ENCODE measurements at regions of chr7 and their contacts with region 1.

Region 1: DNA sequence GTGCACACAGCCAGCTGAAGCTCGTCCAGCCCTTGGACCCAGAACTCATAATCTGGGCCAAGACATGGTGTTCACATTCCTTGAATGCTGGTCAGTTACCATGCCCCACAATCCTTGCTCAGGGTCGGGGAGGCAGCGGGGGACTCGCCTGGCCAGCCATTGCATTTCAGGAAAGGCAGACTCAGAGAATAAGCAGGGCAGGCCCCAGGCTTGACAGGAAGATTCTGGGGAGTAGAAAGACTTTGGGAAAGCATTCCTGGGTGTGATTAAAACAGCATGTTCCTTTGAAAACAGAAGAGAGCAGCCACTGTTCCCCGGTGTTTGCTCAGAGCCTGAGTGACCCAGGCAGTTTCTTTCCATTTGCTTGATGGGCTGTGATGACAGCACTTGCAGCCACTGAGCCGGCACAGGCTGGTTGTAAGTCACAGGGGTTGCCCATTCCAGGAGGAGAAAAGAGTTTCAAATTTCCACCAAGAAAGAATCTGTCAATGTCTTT is 473.7 kb downstream of the TYW1 start:
- DNase-seq: no peak
- ATAC-seq: peak in 3 of 8 donors; percentile 14 to 67 (median 50)
- H3K4me3 ChIP-seq: no peak overlapping the region
- H3K27ac ChIP-seq: no peak overlapping the region
- H3K4me1 ChIP-seq: peaks cover 0 to 7% (median 0%) of the 10 kb centered on the region in 9 donors
- H3K27me3 ChIP-seq: no peaks in the 10 kb centered on the region
- CTCF ChIP-seq: no peak

Region 2: DNA sequence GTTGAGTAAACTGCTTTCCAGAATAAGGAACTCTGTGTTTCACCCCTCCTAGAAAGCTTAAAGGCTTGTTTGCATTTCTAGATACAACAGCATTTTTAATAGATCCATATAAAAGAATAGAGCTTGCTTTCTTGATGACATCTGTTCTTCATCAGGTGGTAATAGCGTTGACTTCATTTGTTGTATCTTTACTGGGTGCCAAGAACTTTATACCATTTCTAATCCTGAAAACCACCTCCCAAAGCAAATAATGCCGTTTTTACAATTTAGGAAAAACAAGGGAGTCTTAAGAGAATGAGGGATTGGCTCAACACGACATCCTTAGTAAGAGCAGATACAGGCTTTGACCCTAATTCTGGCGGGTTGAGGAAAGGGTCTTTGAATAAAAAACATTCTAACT is 519.7 kb after region 1 on chr7:
- intact Hi-C with region 1: loop called in 1 of 10 experiments (anchors 10 kb)
- DNase-seq: no peak
- ATAC-seq: no peak
- H3K4me3 ChIP-seq: no peak overlapping the region
- H3K27ac ChIP-seq: no peak overlapping the region
- H3K4me1 ChIP-seq: no peaks in the 10 kb centered on the region
- H3K27me3 ChIP-seq: peaks cover 0 to 25% (median 4%) of the 10 kb centered on the region in 7 donors
- CTCF ChIP-seq: no peak

Measured in heart right ventricle (tissue), 16 donors.